ENCODE measurements at regions of chr1 and their contacts with region 1.

Region 1: GRCh38 chr1:36285448-36286101 is 20.6 kb upstream of the SH3D21 start:
- DNase-seq: peak; percentile 69
- H3K4me3 ChIP-seq: peak overlapping the region in 1 of 2 experiments; percentile 0; a peak in 1 of 4 replicates
- H3K27ac ChIP-seq: peak overlapping the region; percentile 65 to 83; a peak in 3 of 4 replicates
- H3K4me1 ChIP-seq: peaks cover 0 to 29% of the 10 kb centered on the region in 2 experiments; a peak in 3 of 4 replicates
- H3K27me3 ChIP-seq: no peaks in the 10 kb centered on the region
- CTCF ChIP-seq: peak; percentile 88
- EP300 ChIP-seq: no peak
- RAD21 ChIP-seq: peak; percentile 83

Region 2: DNA sequence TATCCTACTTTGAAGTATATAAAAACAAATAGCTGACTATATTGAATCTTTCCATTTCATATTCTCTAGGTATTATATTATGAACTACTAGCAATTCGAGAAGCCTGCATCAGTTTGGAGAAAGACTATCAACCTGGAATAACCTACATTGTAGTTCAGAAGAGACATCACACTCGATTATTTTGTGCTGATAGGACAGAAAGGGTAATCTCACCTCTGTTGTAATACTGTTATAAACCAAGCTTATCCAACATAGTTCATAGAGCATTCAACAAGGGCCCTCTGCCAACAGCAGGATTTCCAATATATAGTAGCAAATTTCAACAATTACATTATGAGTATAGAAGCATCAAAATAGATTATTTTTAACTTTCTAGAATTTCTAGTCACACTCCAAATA is 245.3 kb before region 1 on chr1:
- CTCF ChIA-PET with region 1: no interaction called
- POLR2A ChIA-PET with region 1: no interaction called
- DNase-seq: no peak
- H3K4me3 ChIP-seq: no peak overlapping the region
- H3K27ac ChIP-seq: no peak overlapping the region
- H3K4me1 ChIP-seq: no peaks in the 10 kb centered on the region
- H3K27me3 ChIP-seq: no peaks in the 10 kb centered on the region
- CTCF ChIP-seq: no peak
- EP300 ChIP-seq: no peak
- RAD21 ChIP-seq: no peak

Region 3: GRCh38 chr1:36070349-36070748 is 215.2 kb before region 1 on chr1:
- CTCF ChIA-PET with region 1: no interaction called
- POLR2A ChIA-PET with region 1: no interaction called
- DNase-seq: no peak
- H3K4me3 ChIP-seq: no peak overlapping the region
- H3K27ac ChIP-seq: no peak overlapping the region
- H3K4me1 ChIP-seq: no peaks in the 10 kb centered on the region
- H3K27me3 ChIP-seq: no peaks in the 10 kb centered on the region
- CTCF ChIP-seq: no peak
- EP300 ChIP-seq: no peak
- RAD21 ChIP-seq: no peak

Region 4: GRCh38 chr1:36238433-36238832 is 47.1 kb before region 1 on chr1:
- CTCF ChIA-PET with region 1: interaction called, 12 read pairs
- POLR2A ChIA-PET with region 1: interaction called, 3 read pairs
- DNase-seq: no peak
- H3K4me3 ChIP-seq: no peak overlapping the region
- H3K27ac ChIP-seq: peak overlapping the region in 1 of 2 experiments; percentile 33; a peak in 2 of 4 replicates
- H3K4me1 ChIP-seq: no peaks in the 10 kb centered on the region
- H3K27me3 ChIP-seq: no peaks in the 10 kb centered on the region
- CTCF ChIP-seq: no peak
- EP300 ChIP-seq: no peak
- RAD21 ChIP-seq: no peak

Region 5: DNA sequence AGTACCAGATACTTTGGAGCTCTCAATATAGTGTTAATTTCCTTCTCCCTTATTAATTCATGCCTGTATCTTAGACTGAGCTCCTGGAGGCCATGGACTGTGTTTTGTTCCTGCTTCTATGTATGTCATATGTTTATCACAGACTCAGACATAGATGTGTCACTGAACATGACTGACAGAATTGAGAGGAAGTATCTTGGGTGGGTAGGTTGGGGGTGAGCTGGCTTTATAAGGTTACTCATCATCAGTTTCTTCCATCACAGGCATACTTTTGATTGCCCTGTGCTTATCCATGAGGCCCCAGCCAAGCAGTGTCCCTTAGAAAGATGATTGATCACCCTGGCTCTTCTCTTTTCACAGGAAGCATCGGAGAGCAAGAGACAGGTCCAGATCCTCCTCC is 15.0 kb after region 1 on chr1:
- CTCF ChIA-PET with region 1: interaction called, 34 read pairs
- POLR2A ChIA-PET with region 1: no interaction called
- DNase-seq: no peak
- H3K4me3 ChIP-seq: no peak overlapping the region
- H3K27ac ChIP-seq: peak overlapping the region; percentile 48 to 76
- H3K4me1 ChIP-seq: peaks cover 2 to 12% of the 10 kb centered on the region in 2 experiments; a peak in 3 of 4 replicates
- H3K27me3 ChIP-seq: no peaks in the 10 kb centered on the region
- CTCF ChIP-seq: no peak
- EP300 ChIP-seq: no peak
- RAD21 ChIP-seq: no peak

Region 6: GRCh38 chr1:36628804-36629203 is 343.2 kb after region 1 on chr1:
- CTCF ChIA-PET with region 1: no interaction called
- POLR2A ChIA-PET with region 1: no interaction called
- DNase-seq: no peak
- H3K4me3 ChIP-seq: no peak overlapping the region
- H3K27ac ChIP-seq: no peak overlapping the region
- H3K4me1 ChIP-seq: no peaks in the 10 kb centered on the region; a peak in 1 of 4 replicates
- H3K27me3 ChIP-seq: no peaks in the 10 kb centered on the region
- CTCF ChIP-seq: no peak
- EP300 ChIP-seq: no peak
- RAD21 ChIP-seq: no peak

Region 7: GRCh38 chr1:36764798-36765197 is 479.2 kb after region 1 on chr1:
- CTCF ChIA-PET with region 1: no interaction called
- POLR2A ChIA-PET with region 1: no interaction called
- DNase-seq: peak; percentile 42
- H3K4me3 ChIP-seq: no peak overlapping the region
- H3K27ac ChIP-seq: no peak overlapping the region
- H3K4me1 ChIP-seq: peaks cover 0 to 16% of the 10 kb centered on the region in 2 experiments; a peak in 2 of 4 replicates
- H3K27me3 ChIP-seq: no peaks in the 10 kb centered on the region
- CTCF ChIP-seq: no peak
- EP300 ChIP-seq: no peak
- RAD21 ChIP-seq: no peak